Panc1 (cell line): ENCODE measurements at regions of chr1 and their contacts with region 1.

Region 1: GRCh38 chr1:3491291-3492246 is 37.1 kb downstream of the ARHGEF16 start:
- DNase-seq: peak; percentile 39
- ATAC-seq: peak; percentile 79
- H3K4me3 ChIP-seq: peak overlapping the region in 1 of 2 experiments; percentile 17; a peak in 1 of 4 replicates
- H3K27ac ChIP-seq: no peak overlapping the region
- H3K4me1 ChIP-seq: 0 out of 2 replicates have a peak, but pooled peaks cover 3% of the 10 kb centered on the region
- H3K27me3 ChIP-seq: no peaks in the 10 kb centered on the region
- CTCF ChIP-seq: peak; percentile 98

Region 2: DNA sequence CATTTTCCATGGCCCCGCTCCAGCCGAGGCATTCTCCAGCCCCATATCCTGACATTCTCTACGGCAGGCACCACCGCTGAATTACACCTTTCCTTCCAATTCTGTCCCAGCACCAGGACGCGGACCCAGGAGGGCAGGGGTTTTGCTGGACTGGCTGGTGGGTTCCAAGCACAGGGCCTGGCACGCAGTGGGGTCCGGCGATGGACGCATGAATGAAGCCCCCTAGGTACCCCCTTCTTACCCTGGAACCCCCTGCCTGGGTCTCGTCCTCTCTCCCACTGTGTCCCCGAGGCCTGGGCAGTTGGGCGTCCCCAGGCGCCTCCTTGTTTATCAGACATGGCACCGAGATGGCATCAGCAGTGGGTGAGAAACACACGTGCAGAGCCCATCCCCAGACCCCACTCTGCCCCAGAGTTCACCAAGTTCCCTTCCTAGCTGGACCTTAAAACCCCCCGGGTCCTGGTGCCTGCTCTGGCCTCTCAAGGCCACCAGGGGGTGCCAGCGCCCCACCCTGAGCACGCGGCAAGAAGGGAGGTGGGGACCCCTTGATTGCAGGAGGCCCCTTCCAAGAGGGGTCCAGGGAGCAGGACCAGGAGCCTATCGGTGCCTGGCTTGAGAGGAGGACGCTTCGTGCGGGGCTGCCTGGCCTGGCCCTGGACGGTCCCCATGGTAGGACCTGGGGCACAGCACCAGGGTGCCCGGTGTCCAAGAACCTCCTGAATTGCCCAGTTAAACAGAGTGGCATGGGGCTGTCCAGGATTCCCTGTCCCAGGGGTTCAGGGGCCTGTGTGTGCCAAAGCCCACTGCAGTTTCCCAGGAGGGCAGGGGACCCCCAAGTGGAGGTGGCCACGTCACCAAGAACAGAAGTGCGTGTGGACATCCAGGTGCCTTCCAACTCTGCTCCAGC is 73.6 kb after region 1 on chr1:
- CTCF ChIA-PET with region 1: interaction called, 3 read pairs
- POLR2A ChIA-PET with region 1: no interaction called
- in situ Hi-C with region 1: no loop called
- intact Hi-C with region 1: loop called (anchors 10 kb)
- DNase-seq: no peak
- ATAC-seq: peak; percentile 67
- H3K4me3 ChIP-seq: no peak overlapping the region
- H3K27ac ChIP-seq: no peak overlapping the region
- H3K4me1 ChIP-seq: peaks cover 6% of the 10 kb centered on the region
- H3K27me3 ChIP-seq: no peaks in the 10 kb centered on the region
- CTCF ChIP-seq: peak; percentile 98